BJ (cell line): ENCODE measurements at regions of chr1 and their contacts with region 1.

Region 1: GRCh38 chr1:100895540-100896483 is at the start of gene SLC30A7:
- DNase-seq: peak; percentile 39
- H3K4me3 ChIP-seq: peak within 1 kb of the TSS; percentile 75
- H3K27me3 ChIP-seq: no peaks in the 10 kb centered on the region
- CTCF ChIP-seq: no peak
- polyA plus RNA-seq, gene SLC30A7: 4.6 and 8.1 TPM in 2 replicates

Region 2: GRCh38 chr1:100100202-100100601 is 795.6 kb before region 1 on chr1:
- CTCF ChIA-PET with region 1: no interaction called
- POLR2A ChIA-PET with region 1: no interaction called
- DNase-seq: peak; percentile 44
- H3K4me3 ChIP-seq: no peak overlapping the region
- H3K27me3 ChIP-seq: no peaks in the 10 kb centered on the region
- CTCF ChIP-seq: no peak

Region 3: GRCh38 chr1:100860397-100860991 is 35.3 kb before region 1 on chr1:
- CTCF ChIA-PET with region 1: no interaction called
- POLR2A ChIA-PET with region 1: no interaction called
- DNase-seq: no peak
- H3K4me3 ChIP-seq: no peak overlapping the region
- H3K27me3 ChIP-seq: no peaks in the 10 kb centered on the region; the same call in 1 of the 2 replicates
- CTCF ChIP-seq: no peak

Region 4: GRCh38 chr1:100921109-100921706 is 25.4 kb after region 1 on chr1:
- CTCF ChIA-PET with region 1: interaction called, 3 read pairs
- POLR2A ChIA-PET with region 1: interaction called, 14 read pairs
- DNase-seq: no peak
- H3K4me3 ChIP-seq: no peak overlapping the region
- H3K27me3 ChIP-seq: no peaks in the 10 kb centered on the region
- CTCF ChIP-seq: peak; percentile 48